Activated T-helper 2 cell treated with anti-CD3 and anti-CD28 coated beads, Interferon-gamma antibody, Interleukin-2, Interleukin-4, amounts not matched to agents 10 μg/mL and 5 μg/mL and 100 μg/mL, durations not matched to agents 14 hours and 24 hours and 36 hours (primary cell): ENCODE measurements at regions of chr12 and their contacts with region 1.

Region 1: GRCh38 chr12:113479590-113480335 is 8.1 kb upstream of the LHX5 start:
- DNase-seq: peak; percentile 30
- H3K4me3 Mint-ChIP-seq: no peak overlapping the region
- H3K27ac Mint-ChIP-seq: peak overlapping the region; percentile 58
- H3K4me1 Mint-ChIP-seq: peaks cover 2% of the 10 kb centered on the region
- H3K27me3 Mint-ChIP-seq: peaks cover 61% of the 10 kb centered on the region

Region 2: DNA sequence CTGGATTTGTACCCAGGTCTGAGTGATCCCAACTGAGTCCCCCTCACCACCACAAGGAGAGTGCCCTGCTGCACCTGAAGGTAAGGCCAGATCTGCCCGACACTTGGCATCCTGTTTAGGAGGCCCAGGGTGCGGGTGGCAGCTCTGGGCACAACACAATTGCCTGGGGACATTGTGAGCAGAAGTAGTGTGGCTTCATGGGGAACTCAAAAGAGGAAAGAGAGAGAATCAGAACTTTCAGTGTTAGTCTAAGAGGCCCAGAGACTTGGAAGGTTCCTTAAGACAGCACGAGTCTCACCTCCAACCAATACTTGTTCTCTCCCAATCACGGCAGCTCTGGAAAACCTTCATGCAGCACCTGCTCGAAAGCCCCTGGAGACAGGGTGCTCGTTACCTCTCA is 138.2 kb before region 1 on chr12:
- intact Hi-C with region 1: no loop called
- DNase-seq: no peak
- H3K4me3 Mint-ChIP-seq: no peak overlapping the region
- H3K27ac Mint-ChIP-seq: no peak overlapping the region
- H3K4me1 Mint-ChIP-seq: no peaks in the 10 kb centered on the region
- H3K27me3 Mint-ChIP-seq: peaks cover 12% of the 10 kb centered on the region

Region 3: GRCh38 chr12:113467502-113468364 is 12.0 kb before region 1 on chr12:
- intact Hi-C with region 1: loop called (anchors 1 kb)
- DNase-seq: no peak
- H3K4me3 Mint-ChIP-seq: no peak overlapping the region
- H3K27ac Mint-ChIP-seq: no peak overlapping the region
- H3K4me1 Mint-ChIP-seq: peaks cover 6% of the 10 kb centered on the region
- H3K27me3 Mint-ChIP-seq: peaks cover 69% of the 10 kb centered on the region

Region 4: GRCh38 chr12:113506830-113507229 is 27.1 kb after region 1 on chr12:
- intact Hi-C with region 1: no loop called
- DNase-seq: no peak
- H3K4me3 Mint-ChIP-seq: no peak overlapping the region
- H3K27ac Mint-ChIP-seq: no peak overlapping the region
- H3K4me1 Mint-ChIP-seq: no peaks in the 10 kb centered on the region
- H3K27me3 Mint-ChIP-seq: peaks cover 3% of the 10 kb centered on the region